ENCODE measurements at regions of chr12 and their contacts with region 1.

Region 1: GRCh38 chr12:19575337-19576243 is 136.3 kb downstream of the AEBP2 start:
- DNase-seq: no peak
- H3K4me3 ChIP-seq: no peak overlapping the region
- H3K27ac ChIP-seq: peak overlapping the region; percentile 49
- H3K27me3 ChIP-seq: no peaks in the 10 kb centered on the region
- CTCF ChIP-seq: no peak

Region 2: DNA sequence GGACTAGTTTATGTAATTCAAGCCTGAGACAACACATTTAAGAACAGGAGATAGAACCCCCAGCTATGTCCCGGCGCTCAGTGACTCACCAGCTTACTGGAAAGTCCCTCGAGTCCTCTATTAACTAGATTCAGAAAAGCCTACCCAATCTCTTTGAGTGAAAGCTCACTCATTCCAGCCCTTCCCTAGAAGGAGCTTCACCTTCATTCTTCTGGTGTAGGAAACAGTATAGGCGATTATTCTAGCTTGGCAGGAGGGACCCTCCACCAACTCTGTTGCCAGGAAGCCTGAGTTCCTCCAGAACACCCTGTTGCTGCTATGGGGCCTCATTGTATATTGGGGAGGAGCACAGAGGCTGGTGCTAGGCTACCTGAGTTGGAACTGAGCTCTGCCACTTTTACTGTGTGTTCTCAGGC is 193.5 kb before region 1 on chr12:
- CTCF ChIA-PET with region 1: no interaction called
- POLR2A ChIA-PET with region 1: no interaction called
- DNase-seq: no peak
- H3K4me3 ChIP-seq: no peak overlapping the region
- H3K27ac ChIP-seq: peak overlapping the region; percentile 78
- H3K27me3 ChIP-seq: no peaks in the 10 kb centered on the region
- CTCF ChIP-seq: no peak

Region 3: GRCh38 chr12:19553175-19553574 is 22.4 kb before region 1 on chr12:
- CTCF ChIA-PET with region 1: interaction called, 11 read pairs
- POLR2A ChIA-PET with region 1: no interaction called
- DNase-seq: no peak
- H3K4me3 ChIP-seq: no peak overlapping the region
- H3K27ac ChIP-seq: no peak overlapping the region
- H3K27me3 ChIP-seq: no peaks in the 10 kb centered on the region
- CTCF ChIP-seq: no peak